ENCODE measurements at regions of chr17 and their contacts with region 1.

Region 1: DNA sequence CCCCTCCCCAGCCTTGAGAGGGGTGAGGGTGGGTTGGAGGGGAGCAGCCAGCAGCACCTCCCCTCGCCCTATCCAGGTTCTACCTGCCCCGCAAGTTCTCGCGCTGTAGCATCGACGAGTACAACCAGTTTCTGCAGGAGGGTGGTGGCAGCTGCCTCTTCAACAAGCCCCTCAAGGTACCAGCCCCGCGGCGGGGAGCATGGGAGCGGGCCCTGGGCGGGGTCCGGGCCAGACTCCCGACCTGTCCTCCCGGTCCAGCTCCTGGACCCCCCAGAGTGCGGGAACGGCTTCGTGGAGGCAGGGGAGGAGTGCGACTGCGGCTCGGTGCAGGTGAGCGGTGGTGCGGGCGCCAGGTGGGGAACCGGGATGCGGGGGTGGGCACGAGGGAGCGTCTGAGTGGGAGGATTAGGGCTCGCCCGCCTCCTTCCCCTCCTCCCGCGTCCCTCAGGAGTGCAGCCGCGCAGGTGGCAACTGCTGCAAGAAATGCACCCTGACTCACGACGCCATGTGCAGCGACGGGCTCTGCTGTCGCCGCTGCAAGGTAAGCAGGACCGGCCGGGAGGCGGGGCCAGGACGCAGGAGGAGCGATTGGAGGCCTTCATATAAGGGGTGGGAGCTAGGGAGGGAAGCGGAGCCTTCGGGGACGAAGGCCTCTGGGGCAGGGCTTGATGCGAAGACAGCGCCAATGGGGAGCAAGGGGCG is 16.5 kb downstream of the ADAM11 start:
- DNase-seq: peak; percentile 99
- ATAC-seq: peak; percentile 78 to 92
- H3K4me3 ChIP-seq: peak overlapping the region; percentile 54
- H3K27ac ChIP-seq: peak overlapping the region; percentile 13 to 64; a peak in 4 of 6 replicates
- H3K4me1 ChIP-seq: peaks cover 17% of the 10 kb centered on the region
- CTCF ChIP-seq: peak; percentile 34; the same call in 1 of the 3 replicates
- EP300 ChIP-seq: no peak
- POLR2A ChIP-seq: peak; percentile 58
- RAD21 ChIP-seq: peak in 1 of 2 experiments; percentile 8; a peak in 1 of 5 replicates

Region 2: DNA sequence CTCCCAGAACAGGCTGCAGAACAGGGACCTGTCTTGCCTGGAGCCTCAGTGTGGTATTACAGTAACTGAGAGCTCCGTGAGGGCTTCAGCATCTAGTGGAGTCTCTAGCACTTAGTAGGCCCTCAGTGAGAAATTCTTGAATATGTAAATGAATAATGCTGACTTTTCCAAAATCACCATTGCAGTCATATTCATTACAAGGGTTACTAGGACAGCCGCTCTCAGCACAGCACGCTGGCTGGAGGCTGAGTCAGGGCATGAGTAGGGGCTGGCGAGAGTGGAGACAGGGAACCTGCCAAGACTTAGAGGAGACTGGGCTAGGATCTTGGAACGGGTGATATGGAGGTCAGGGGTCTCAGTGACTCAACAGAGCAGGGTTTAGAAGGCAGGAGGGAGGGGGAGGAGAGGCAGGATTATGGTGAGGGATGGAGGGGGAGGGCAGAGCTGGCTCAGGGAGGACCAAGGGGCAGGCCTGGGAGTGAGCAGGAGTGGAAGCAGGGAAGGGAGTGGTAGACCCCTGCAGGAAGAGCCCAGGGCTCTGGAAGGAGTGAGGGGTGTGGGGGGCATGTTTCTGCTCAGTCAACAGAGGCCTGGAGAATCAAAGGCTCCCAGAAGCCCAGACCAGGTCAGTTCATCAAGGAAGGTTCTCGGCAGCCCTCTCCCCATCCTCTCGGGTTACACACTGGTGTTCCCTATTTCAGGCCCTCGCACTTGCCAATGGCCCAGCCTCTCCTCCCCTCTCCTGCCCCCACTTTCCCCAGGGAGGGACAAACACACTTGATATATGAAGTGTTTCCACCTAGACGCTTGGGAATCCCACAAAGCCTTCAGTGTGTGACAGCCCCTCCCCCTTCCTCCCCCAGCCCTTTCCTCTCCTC is 175.8 kb before region 1 on chr17:
- CTCF ChIA-PET with region 1: no interaction called
- POLR2A ChIA-PET with region 1: no interaction called
- DNase-seq: peak; percentile 87 to 93
- ATAC-seq: peak; percentile 90 to 95
- H3K4me3 ChIP-seq: no peak overlapping the region
- H3K27ac ChIP-seq: peak overlapping the region; percentile 86 to 88
- H3K4me1 ChIP-seq: peaks cover 50% of the 10 kb centered on the region
- CTCF ChIP-seq: no peak
- EP300 ChIP-seq: no peak
- POLR2A ChIP-seq: no peak
- RAD21 ChIP-seq: peak; percentile 14 to 32; a peak in 4 of 5 replicates

Region 3: DNA sequence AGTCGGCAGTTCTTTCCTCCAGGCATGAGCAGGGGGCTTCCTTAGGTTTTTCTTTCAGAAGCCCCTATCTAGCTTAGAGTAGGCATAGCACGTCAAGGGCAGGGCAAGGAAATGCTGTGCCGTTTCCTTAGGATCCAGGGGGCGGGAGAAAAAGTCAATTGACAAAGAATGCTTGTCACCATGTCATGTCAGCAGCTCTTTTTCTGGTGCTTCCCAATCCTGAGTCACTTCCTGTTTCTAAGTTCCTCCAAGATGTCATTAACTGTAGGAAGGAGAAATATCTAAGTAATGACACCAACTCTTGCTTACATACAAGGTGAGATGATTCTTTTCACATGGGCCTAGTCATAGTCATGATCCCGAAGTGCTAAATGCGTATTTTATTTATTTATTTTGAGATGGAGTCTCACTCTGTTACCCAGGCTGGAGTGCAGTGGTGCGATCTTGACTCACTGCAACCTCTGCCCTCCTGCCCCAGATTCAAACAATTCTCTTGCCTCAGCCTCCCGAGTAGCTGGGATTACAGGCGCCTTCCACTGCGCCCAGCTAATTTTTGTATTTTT is 19.6 kb after region 1 on chr17:
- CTCF ChIA-PET with region 1: interaction called, 89 read pairs
- POLR2A ChIA-PET with region 1: no interaction called
- DNase-seq: peak; percentile 56 to 84
- ATAC-seq: peak; percentile 81 to 83
- H3K4me3 ChIP-seq: no peak overlapping the region
- H3K27ac ChIP-seq: peak overlapping the region; percentile 28 to 78; a peak in 5 of 6 replicates
- H3K4me1 ChIP-seq: peaks cover 18% of the 10 kb centered on the region
- CTCF ChIP-seq: no peak
- EP300 ChIP-seq: no peak
- POLR2A ChIP-seq: no peak
- RAD21 ChIP-seq: no peak

Region 4: GRCh38 chr17:44820631-44821212 is 45.4 kb after region 1 on chr17:
- CTCF ChIA-PET with region 1: interaction called, 52 read pairs
- POLR2A ChIA-PET with region 1: interaction called, 3 read pairs
- DNase-seq: peak; percentile 67 to 79
- ATAC-seq: peak; percentile 88 to 89; a peak in 5 of 6 replicates
- H3K4me3 ChIP-seq: peak overlapping the region; percentile 6; the same call in 1 of the 3 replicates
- H3K27ac ChIP-seq: peak overlapping the region; percentile 37 to 75; a peak in 5 of 6 replicates
- H3K4me1 ChIP-seq: peaks cover 36% of the 10 kb centered on the region
- CTCF ChIP-seq: no peak
- EP300 ChIP-seq: no peak
- POLR2A ChIP-seq: no peak
- RAD21 ChIP-seq: no peak

Region 5: DNA sequence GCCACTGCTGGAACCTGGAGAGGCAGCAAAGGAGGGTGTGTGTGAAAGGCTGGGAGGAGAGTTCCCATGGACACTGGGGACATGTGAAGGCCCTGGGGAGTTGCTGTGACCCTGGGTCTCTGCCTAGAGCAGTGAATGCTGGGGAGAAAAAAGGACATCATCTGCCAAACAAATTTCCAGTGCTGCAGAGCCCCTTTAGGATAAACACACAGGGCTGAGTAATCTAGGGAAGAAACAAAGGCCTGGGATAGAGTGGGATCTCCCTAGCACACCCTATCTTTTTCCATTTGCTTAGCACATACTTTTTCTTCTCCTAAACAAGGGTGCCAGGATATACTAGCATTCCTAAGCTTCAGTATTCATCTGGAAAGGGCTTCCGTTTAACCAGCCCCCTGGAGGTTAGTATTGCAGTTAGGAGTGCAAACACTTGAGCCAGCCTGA is 69.1 kb after region 1 on chr17:
- CTCF ChIA-PET with region 1: interaction called, 1,787 read pairs
- POLR2A ChIA-PET with region 1: no interaction called
- DNase-seq: no peak
- ATAC-seq: peak; percentile 10 to 35; a peak in 4 of 6 replicates
- H3K4me3 ChIP-seq: no peak overlapping the region
- H3K27ac ChIP-seq: no peak overlapping the region
- H3K4me1 ChIP-seq: no peaks in the 10 kb centered on the region
- CTCF ChIP-seq: no peak
- EP300 ChIP-seq: no peak
- POLR2A ChIP-seq: no peak
- RAD21 ChIP-seq: no peak

Region 6: GRCh38 chr17:44899069-44899782 is 123.9 kb after region 1 on chr17 and contains the start of gene EFTUD2:
- CTCF ChIA-PET with region 1: interaction called, 14 read pairs
- POLR2A ChIA-PET with region 1: no interaction called
- DNase-seq: peak; percentile 94 to 96
- ATAC-seq: peak; percentile 83 to 85
- H3K4me3 ChIP-seq: peak within 1 kb of the TSS; percentile 65
- H3K27ac ChIP-seq: peak within 1 kb of the TSS; percentile 87 to 96
- H3K4me1 ChIP-seq: peaks cover 37% of the 10 kb centered on the region
- CTCF ChIP-seq: no peak
- EP300 ChIP-seq: peak in 1 of 2 experiments; percentile 25; a peak in 1 of 5 replicates
- POLR2A ChIP-seq: peak; percentile 85
- RAD21 ChIP-seq: peak in 1 of 2 experiments; percentile 18; a peak in 2 of 5 replicates
- polyA plus RNA-seq, gene EFTUD2: 254 and 353 TPM in 2 replicates

Region 7: DNA sequence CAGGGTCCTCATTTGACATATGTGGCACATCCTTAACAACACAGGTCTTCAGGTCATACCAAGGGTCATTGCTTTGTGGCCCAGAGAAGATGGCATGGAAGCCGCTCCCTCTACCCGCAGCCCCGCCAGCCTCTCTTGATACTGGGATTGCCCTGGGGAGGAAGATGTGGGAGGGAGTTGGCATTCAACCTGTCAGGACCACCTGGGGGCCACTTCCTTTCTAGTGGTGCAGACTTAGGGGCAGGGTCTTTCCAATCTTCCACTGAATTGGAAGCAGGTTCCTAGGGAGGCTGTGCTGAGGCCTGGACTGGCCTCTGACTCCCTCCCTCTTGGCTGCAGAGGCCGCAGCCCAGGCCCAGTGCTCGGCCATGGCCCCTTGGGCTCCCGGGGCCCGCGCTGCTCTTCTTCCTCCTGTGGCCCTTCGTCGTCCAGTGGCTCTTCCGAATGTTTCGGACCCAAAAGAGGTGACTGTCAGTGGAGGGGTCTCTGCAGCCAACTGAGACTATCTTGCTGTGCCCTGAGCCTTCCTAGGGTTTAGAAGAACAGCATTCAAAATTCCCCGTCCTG is 367.9 kb after region 1 on chr17:
- CTCF ChIA-PET with region 1: no interaction called
- POLR2A ChIA-PET with region 1: no interaction called
- DNase-seq: no peak
- ATAC-seq: no peak
- H3K4me3 ChIP-seq: no peak overlapping the region
- H3K27ac ChIP-seq: no peak overlapping the region
- H3K4me1 ChIP-seq: peaks cover 13% of the 10 kb centered on the region
- CTCF ChIP-seq: no peak
- EP300 ChIP-seq: no peak
- POLR2A ChIP-seq: no peak
- RAD21 ChIP-seq: no peak

Measured in A549 (cell line).